Adrenal gland (tissue), 19 donors: ENCODE measurements at regions of chr12 and their contacts with region 1.

Region 1: DNA sequence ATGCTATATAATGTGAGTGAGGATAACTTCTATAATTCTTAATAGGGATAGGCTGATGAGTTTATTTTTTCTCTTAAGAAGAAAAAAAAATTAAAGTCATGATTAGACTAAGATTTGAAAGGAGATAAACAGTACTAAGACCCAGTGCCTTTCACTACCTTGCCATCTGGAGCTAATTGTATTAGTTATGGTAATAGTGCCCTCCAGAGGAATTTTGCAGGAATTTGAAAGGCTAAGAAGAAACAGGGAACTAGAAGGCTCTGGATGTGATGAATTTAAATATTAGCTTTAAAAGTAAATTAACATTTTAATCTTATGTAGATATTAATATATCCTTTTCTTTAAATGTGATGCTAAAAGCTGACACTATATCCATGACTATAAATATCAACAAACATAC is 36.6 kb upstream of the PIK3C2G start:
- DNase-seq: no peak
- H3K4me3 ChIP-seq: no peak overlapping the region
- H3K27ac ChIP-seq: no peak overlapping the region
- H3K4me1 ChIP-seq: no peaks in the 10 kb centered on the region
- H3K27me3 ChIP-seq: no peaks in the 10 kb centered on the region
- CTCF ChIP-seq: peak; percentile 42 to 66 (median 60)
- POLR2A ChIP-seq: no peak

Region 2: GRCh38 chr12:18054925-18055324 is 169.8 kb before region 1 on chr12:
- intact Hi-C with region 1: no loop called
- DNase-seq: no peak
- H3K4me3 ChIP-seq: no peak overlapping the region
- H3K27ac ChIP-seq: no peak overlapping the region
- H3K4me1 ChIP-seq: no peaks in the 10 kb centered on the region
- H3K27me3 ChIP-seq: no peaks in the 10 kb centered on the region
- CTCF ChIP-seq: no peak
- POLR2A ChIP-seq: no peak

Region 3: DNA sequence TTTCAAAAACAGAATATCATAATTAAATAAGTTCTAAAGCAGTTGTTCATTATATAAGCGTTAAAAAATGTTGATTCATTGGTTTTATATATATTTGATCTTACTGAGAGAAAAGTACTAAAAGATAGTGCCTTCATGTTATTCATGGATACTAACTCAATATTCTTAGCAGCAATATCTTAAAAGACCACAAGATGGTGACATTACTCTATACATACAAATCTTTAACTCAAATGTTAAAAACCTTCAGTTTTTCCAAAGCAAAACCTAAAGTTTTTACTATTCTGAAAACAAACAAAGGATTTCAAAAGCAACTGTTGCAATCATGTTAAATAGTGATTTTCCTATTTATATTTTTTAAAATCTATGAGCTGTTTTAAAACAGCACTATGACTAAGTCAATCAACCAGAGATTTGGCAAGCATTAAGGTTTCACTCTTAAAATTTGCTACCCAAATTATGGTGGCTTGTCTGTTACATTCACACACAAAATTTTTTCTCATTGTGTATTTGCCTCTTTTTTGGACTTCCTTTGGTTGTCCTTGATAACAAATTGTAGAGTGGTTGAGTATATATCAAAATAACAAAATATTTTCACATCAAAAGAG is 84.7 kb before region 1 on chr12:
- intact Hi-C with region 1: loop called in 1 of 2 experiments (anchors 5 kb)
- DNase-seq: no peak
- H3K4me3 ChIP-seq: no peak overlapping the region
- H3K27ac ChIP-seq: no peak overlapping the region
- H3K4me1 ChIP-seq: peaks cover 0 to 8% of the 10 kb centered on the region in 2 donors
- H3K27me3 ChIP-seq: no peaks in the 10 kb centered on the region
- CTCF ChIP-seq: peak; percentile 53 to 86 (median 76)
- POLR2A ChIP-seq: no peak